ENCODE measurements at regions of chr7 and their contacts with region 1.

Region 1: DNA sequence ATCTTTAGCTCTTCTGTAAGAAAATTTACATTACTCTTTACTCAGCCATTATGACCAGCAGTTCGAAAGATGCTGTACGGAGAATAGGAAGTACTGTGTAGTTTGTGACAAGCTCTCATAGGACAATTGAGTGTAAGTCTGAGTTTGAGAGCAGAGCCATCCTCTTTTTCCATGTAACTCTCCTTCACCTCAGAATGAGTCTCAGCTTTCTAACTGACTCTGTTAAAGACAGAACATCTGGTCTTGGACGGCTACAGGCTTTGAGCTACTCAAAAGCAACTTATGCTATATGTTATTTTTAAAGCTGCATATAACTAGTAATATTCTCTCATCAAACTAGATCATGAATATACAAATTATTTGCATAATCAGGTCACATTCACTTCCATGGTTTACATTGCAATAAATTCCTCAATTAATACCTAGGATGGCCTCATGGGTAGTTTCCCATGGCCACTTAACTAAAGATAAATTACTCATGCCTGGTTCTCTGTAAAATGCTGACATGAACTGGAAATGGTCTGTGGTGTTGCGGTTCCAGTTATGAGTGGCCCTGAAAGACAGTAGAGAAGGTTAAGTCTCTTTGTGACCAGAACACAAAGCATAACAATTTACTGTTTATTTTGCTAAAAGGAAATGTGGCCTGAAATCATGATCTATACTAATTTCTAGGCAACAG is 358.7 kb downstream of the PHF14 start:
- DNase-seq: no peak
- ATAC-seq: no peak
- H3K4me3 ChIP-seq: no peak overlapping the region
- H3K27ac ChIP-seq: no peak overlapping the region
- H3K4me1 ChIP-seq: no peaks in the 10 kb centered on the region
- H3K27me3 ChIP-seq: no peaks in the 10 kb centered on the region
- CTCF ChIP-seq: no peak
- POLR2A ChIP-seq: no peak

Region 2: DNA sequence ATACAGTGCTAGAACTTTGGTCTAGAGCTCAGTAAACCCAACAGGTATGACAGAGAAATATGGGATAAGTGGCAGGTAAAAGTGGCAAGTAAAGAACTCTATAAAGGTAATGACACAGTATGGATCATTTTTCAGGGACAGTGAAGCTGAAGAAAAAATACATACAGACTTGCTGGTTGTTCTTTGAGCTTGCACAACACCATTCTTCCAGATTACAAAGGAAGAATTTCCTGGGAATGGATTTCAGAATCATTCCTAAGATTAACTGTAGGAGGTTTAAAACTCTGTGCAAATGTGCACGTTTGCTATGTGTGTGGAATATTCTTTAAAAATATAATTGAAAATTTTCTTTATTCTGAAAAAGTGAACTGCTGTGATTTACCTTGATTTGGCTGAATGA is 322.7 kb before region 1 on chr7:
- intact Hi-C with region 1: loop called in 1 of 10 experiments (anchors 5 kb)
- DNase-seq: no peak
- ATAC-seq: no peak
- H3K4me3 ChIP-seq: no peak overlapping the region
- H3K27ac ChIP-seq: no peak overlapping the region
- H3K4me1 ChIP-seq: peaks cover 0 to 5% (median 0%) of the 10 kb centered on the region in 12 donors
- H3K27me3 ChIP-seq: no peaks in the 10 kb centered on the region
- CTCF ChIP-seq: no peak
- POLR2A ChIP-seq: no peak

Region 3: GRCh38 chr7:11281953-11282352 is 50.4 kb before region 1 on chr7:
- intact Hi-C with region 1: no loop called
- DNase-seq: no peak
- ATAC-seq: no peak
- H3K4me3 ChIP-seq: no peak overlapping the region
- H3K27ac ChIP-seq: no peak overlapping the region
- H3K4me1 ChIP-seq: no peaks in the 10 kb centered on the region
- H3K27me3 ChIP-seq: no peaks in the 10 kb centered on the region
- CTCF ChIP-seq: no peak
- POLR2A ChIP-seq: no peak